Transverse colon (tissue), 4 donors: ENCODE measurements at regions of chr1 and their contacts with region 1.

Region 1: DNA sequence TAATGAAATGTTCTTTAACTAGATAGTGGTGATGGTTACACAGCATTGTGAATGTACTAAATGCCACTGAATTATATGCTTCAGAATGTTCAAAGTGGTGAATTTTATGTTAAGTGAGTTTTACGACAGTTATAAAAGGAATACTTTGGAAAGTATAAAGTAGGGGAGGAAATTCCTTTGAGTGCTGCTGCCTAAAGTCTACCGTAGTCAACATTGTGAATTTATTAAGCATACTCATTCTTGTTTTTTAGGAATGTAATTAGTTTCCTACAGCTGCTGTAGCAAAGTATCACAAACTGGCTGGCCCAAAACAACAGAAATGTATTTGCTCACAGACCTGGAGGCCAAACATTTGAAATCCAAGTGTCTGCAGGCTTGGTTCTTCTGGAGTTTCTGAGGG is 73.0 kb downstream of the SWT1 start:
- DNase-seq: no peak
- H3K4me3 ChIP-seq: no peak overlapping the region
- H3K27ac ChIP-seq: peak overlapping the region in 2 of 4 donors; percentile 39 to 47
- H3K4me1 ChIP-seq: no peaks in the 10 kb centered on the region
- H3K27me3 ChIP-seq: no peaks in the 10 kb centered on the region
- CTCF ChIP-seq: no peak
- EP300 ChIP-seq: no peak
- POLR2A ChIP-seq: no peak

Region 2: GRCh38 chr1:185244015-185244747 is 14.2 kb after region 1 on chr1:
- in situ Hi-C with region 1: no loop called
- intact Hi-C with region 1: loop called (anchors 2 kb)
- DNase-seq: no peak
- H3K4me3 ChIP-seq: no peak overlapping the region
- H3K27ac ChIP-seq: no peak overlapping the region
- H3K4me1 ChIP-seq: no peaks in the 10 kb centered on the region
- H3K27me3 ChIP-seq: no peaks in the 10 kb centered on the region
- CTCF ChIP-seq: no peak
- EP300 ChIP-seq: no peak
- POLR2A ChIP-seq: no peak

Region 3: GRCh38 chr1:185338719-185339622 is 109.0 kb after region 1 on chr1:
- in situ Hi-C with region 1: no loop called
- intact Hi-C with region 1: no loop called
- DNase-seq: peak; percentile 62
- H3K4me3 ChIP-seq: no peak overlapping the region
- H3K27ac ChIP-seq: peak overlapping the region; percentile 12 to 52 (median 36)
- H3K4me1 ChIP-seq: peaks cover 0 to 11% (median 0%) of the 10 kb centered on the region in 4 donors
- H3K27me3 ChIP-seq: no peaks in the 10 kb centered on the region
- CTCF ChIP-seq: no peak
- EP300 ChIP-seq: no peak
- POLR2A ChIP-seq: no peak